ENCODE measurements at regions of chr2 and their contacts with region 1.

Region 1: DNA sequence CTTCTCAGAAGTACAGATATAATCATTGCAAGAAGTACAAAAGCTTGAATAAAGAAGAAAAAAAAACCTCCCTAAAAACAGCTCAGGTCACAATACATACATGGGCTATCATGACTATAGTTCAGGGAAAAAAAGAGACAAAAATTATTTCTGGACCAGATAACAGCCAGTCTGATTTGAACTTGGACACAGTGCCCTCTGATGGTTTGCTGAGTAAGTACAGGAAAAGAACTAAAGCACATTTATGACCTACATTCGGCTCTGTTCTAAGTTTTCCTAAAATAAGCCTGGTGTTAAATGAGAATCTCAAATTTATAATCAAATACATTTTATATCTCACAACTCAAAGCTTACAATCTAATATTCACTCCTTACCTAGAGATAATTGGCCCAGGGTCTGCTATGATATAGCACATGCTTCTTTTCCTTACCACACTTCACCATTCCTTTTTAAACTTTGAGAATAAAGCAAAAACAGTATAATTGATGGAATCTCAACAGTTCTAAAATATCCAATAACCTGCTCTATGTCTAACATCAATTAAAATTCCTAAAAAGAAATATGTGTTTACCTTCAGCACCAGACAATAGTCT is 81.1 kb downstream of the RAPH1 start:
- DNase-seq: peak; percentile 36 to 64
- ATAC-seq: peak; percentile 70 to 87; a peak in 5 of 6 replicates
- H3K4me3 ChIP-seq: no peak overlapping the region
- H3K27ac ChIP-seq: no peak overlapping the region
- H3K4me1 ChIP-seq: peaks cover 20% of the 10 kb centered on the region
- CTCF ChIP-seq: peak; percentile 85
- EP300 ChIP-seq: no peak
- POLR2A ChIP-seq: no peak
- RAD21 ChIP-seq: peak; percentile 84

Region 2: GRCh38 chr2:203225423-203226039 is 228.4 kb before region 1 on chr2:
- CTCF ChIA-PET with region 1: interaction called, 16 read pairs
- POLR2A ChIA-PET with region 1: no interaction called
- DNase-seq: peak in 1 of 2 experiments; percentile 36
- ATAC-seq: peak in 1 of 2 experiments; percentile 90; a peak in 4 of 6 replicates
- H3K4me3 ChIP-seq: no peak overlapping the region
- H3K27ac ChIP-seq: no peak overlapping the region
- H3K4me1 ChIP-seq: no peaks in the 10 kb centered on the region
- CTCF ChIP-seq: peak; percentile 62
- EP300 ChIP-seq: no peak
- POLR2A ChIP-seq: no peak
- RAD21 ChIP-seq: peak; percentile 56 to 61; a peak in 4 of 5 replicates

Region 3: GRCh38 chr2:203437511-203437910 is 16.4 kb before region 1 on chr2:
- CTCF ChIA-PET with region 1: interaction called, 19 read pairs
- POLR2A ChIA-PET with region 1: no interaction called
- DNase-seq: no peak
- ATAC-seq: no peak
- H3K4me3 ChIP-seq: no peak overlapping the region
- H3K27ac ChIP-seq: no peak overlapping the region
- H3K4me1 ChIP-seq: peaks cover 6% of the 10 kb centered on the region; the same call in 1 of the 3 replicates
- CTCF ChIP-seq: no peak
- EP300 ChIP-seq: no peak
- POLR2A ChIP-seq: no peak
- RAD21 ChIP-seq: no peak

Region 4: DNA sequence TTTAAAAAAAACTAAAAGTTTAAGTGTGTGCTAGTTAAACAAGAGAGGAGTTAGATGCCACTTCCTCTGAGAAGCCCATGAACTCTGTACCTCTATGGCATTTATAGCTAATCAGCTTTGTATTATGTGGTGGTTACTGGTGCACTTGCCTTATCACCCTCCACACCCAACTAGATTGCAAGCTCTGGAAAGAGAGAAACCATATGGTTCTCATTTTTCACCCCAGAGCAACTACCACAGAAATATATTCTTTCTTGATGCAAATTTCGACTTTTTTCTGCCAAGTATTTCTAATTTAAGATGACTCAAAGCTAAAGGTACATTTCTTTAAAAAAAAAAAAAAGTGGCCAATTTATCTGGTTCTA is 57.0 kb after region 1 on chr2:
- CTCF ChIA-PET with region 1: no interaction called
- POLR2A ChIA-PET with region 1: no interaction called
- DNase-seq: no peak
- ATAC-seq: no peak
- H3K4me3 ChIP-seq: no peak overlapping the region
- H3K27ac ChIP-seq: no peak overlapping the region
- H3K4me1 ChIP-seq: 0 out of 3 replicates have a peak, but pooled peaks cover 4% of the 10 kb centered on the region
- CTCF ChIP-seq: no peak
- EP300 ChIP-seq: no peak
- POLR2A ChIP-seq: no peak
- RAD21 ChIP-seq: no peak